ENCODE measurements at regions of chr1 and their contacts with region 1.

Region 1: GRCh38 chr1:27097484-27097917 is 57.4 kb downstream of the SLC9A1 start:
- DNase-seq: peak; percentile 94
- H3K4me3 ChIP-seq: no peak overlapping the region
- H3K27ac ChIP-seq: no peak overlapping the region
- H3K4me1 ChIP-seq: peaks cover 30 to 33% (median 31%) of the 10 kb centered on the region in 4 donors
- H3K27me3 ChIP-seq: no peaks in the 10 kb centered on the region
- CTCF ChIP-seq: peak; percentile 98 to 99 (median 99)
- EP300 ChIP-seq: no peak
- POLR2A ChIP-seq: no peak

Region 2: GRCh38 chr1:26686795-26687194 is 410.7 kb before region 1 on chr1:
- intact Hi-C with region 1: no loop called
- DNase-seq: no peak
- H3K4me3 ChIP-seq: no peak overlapping the region
- H3K27ac ChIP-seq: no peak overlapping the region
- H3K4me1 ChIP-seq: peaks cover 2 to 16% (median 11%) of the 10 kb centered on the region in 4 donors
- H3K27me3 ChIP-seq: no peaks in the 10 kb centered on the region
- CTCF ChIP-seq: no peak
- EP300 ChIP-seq: no peak
- POLR2A ChIP-seq: no peak

Region 3: GRCh38 chr1:26965213-26965612 is 132.3 kb before region 1 on chr1:
- intact Hi-C with region 1: loop called (anchors 5 kb)
- DNase-seq: no peak
- H3K4me3 ChIP-seq: no peak overlapping the region
- H3K27ac ChIP-seq: no peak overlapping the region
- H3K4me1 ChIP-seq: peaks cover 1 to 4% (median 3%) of the 10 kb centered on the region in 4 donors
- H3K27me3 ChIP-seq: peaks cover 5 to 52% (median 9%) of the 10 kb centered on the region in 4 donors
- CTCF ChIP-seq: no peak
- EP300 ChIP-seq: no peak
- POLR2A ChIP-seq: no peak

Region 4: DNA sequence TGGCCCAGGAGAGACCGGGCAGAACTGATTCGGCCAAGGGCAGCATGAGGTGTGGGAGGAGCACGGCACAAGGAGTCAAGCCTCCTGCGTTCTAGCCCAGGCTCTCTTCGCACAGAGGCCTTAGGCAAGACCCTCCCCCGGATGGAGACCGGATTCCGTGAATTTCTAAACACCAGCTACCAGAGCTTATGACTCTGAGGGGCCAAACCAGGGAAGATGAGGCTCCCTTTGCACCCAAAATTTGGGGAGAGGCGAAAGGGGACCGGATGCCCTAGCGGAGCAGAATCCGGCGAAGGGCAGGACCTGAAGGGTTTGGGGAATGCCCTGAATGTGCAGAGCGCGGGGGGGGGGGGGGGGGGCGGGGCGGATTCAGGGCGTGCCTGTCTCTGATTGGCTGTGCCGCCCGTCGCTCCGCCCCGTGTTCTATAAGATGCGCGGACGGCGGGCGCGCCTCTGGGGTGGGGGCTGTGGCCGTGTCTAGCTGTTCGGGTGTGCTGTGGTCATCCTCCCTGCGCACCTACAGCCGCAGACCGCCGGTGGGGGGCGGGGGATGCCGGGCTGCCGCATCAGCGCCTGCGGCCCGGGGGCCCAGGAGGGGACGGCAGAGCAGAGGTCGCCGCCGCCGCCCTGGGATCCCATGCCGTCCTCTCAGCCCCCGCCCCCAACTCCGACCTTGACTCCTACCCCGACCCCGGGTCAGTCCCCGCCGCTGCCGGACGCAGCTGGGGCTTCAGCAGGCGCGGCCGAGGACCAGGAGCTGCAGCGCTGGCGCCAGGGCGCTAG is 104.1 kb before region 1 on chr1 and contains the start of gene TRNP1:
- intact Hi-C with region 1: loop called (anchors 2 kb)
- DNase-seq: peak; percentile 95
- H3K4me3 ChIP-seq: peak within 1 kb of the TSS; percentile 75 to 93 (median 88)
- H3K27ac ChIP-seq: peak within 1 kb of the TSS; percentile 93 to 97 (median 95)
- H3K4me1 ChIP-seq: peaks cover 34 to 57% (median 53%) of the 10 kb centered on the region in 4 donors
- H3K27me3 ChIP-seq: peaks cover 0 to 26% (median 6%) of the 10 kb centered on the region in 4 donors
- CTCF ChIP-seq: no peak
- EP300 ChIP-seq: no peak
- POLR2A ChIP-seq: peak; percentile 53
- total RNA-seq, gene TRNP1: 33.6 to 50.3 (median 41.5) TPM

Region 5: DNA sequence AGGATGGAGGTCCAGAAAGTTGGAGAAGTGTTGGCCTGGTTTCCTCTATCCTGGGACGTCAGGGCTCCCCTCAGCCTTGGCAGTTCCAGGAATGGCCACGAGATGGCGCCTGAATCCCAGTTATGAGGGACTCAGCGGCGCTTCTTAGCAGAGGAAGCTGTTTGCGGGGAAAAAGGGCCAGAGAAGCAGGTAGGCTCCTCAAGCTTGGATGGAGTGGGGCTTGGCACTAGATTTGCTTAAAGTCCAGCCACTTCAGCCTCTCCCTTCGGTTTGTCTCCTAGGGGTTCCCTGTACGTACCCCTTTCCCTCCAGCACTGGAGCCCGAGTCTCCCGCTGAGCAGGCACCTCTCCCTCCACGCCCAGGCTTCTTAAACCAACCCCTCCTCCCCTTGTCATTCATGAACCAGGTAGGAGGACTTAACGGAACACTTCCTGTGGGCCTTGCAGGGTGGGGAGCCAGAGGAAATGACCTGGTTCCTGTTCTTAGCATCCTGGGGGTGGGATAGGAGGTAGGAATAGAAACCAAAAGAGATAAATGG is 52.8 kb before region 1 on chr1:
- intact Hi-C with region 1: loop called (anchors 1 kb)
- DNase-seq: peak; percentile 96
- H3K4me3 ChIP-seq: peak overlapping the region; percentile 21 to 44 (median 29)
- H3K27ac ChIP-seq: no peak overlapping the region
- H3K4me1 ChIP-seq: peaks cover 5 to 24% (median 16%) of the 10 kb centered on the region in 4 donors
- H3K27me3 ChIP-seq: no peaks in the 10 kb centered on the region
- CTCF ChIP-seq: peak; percentile 97 to 99 (median 98)
- EP300 ChIP-seq: no peak
- POLR2A ChIP-seq: no peak

Region 6: DNA sequence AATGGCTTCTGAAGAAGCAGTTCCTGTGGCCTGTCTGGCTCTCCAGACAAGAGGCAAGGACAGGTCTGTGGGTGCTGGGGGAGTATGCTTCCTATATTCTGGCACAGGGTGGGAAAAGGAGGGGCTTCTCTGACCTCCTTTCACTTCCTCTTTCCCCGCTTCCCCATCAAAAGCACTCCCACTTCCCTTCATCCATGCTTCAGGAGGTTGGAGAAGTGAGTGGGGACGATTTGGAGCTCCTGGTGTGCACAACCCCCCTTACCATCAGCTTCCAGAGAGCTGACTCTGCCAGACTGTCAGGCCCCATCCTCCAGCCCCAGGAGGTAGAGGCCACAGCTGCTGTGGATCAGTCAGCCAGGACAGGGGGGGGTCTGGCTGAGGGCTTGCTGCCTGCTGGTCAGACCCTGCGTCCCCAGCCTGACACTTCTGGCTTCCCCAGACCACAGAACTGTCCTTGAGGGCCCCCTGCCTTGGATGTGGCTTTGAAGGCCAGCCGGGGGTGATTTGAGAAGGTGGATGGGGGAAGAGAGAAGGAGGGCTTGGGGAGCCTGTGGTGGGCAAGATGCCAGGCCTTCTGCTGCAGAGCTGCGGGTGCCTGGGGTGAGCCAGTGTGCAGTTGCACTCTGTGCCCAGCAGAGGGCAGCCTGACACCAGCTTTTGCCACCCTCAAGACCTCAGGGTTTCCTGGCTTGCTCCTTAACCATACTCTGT is 203.0 kb after region 1 on chr1:
- intact Hi-C with region 1: no loop called
- DNase-seq: peak; percentile 95
- H3K4me3 ChIP-seq: no peak overlapping the region
- H3K27ac ChIP-seq: peak overlapping the region; percentile 87 to 96 (median 92)
- H3K4me1 ChIP-seq: peaks cover 34 to 50% (median 48%) of the 10 kb centered on the region in 4 donors
- H3K27me3 ChIP-seq: no peaks in the 10 kb centered on the region
- CTCF ChIP-seq: peak in 2 of 3 experiments; percentile 98 to 100
- EP300 ChIP-seq: no peak
- POLR2A ChIP-seq: no peak